CD8-positive, alpha-beta T cell (primary cell): ENCODE measurements at regions of chr9 and their contacts with region 1.

Region 1: GRCh38 chr9:113511856-113512761 is 48.6 kb downstream of the RGS3 start:
- DNase-seq: peak; percentile 41 to 89 (median 77)
- ATAC-seq: peak; percentile 68
- H3K4me3 ChIP-seq: peak overlapping the region; percentile 16 to 26
- H3K4me3 Mint-ChIP-seq: peak overlapping the region; percentile 74
- H3K27ac ChIP-seq: peak overlapping the region; percentile 60 to 65
- H3K27ac Mint-ChIP-seq: peak overlapping the region; percentile 90
- H3K4me1 ChIP-seq: peaks cover 59% of the 10 kb centered on the region
- H3K4me1 Mint-ChIP-seq: peaks cover 68% of the 10 kb centered on the region
- H3K27me3 ChIP-seq: no peaks in the 10 kb centered on the region
- H3K27me3 Mint-ChIP-seq: no peaks in the 10 kb centered on the region
- CTCF ChIP-seq: no peak

Region 2: DNA sequence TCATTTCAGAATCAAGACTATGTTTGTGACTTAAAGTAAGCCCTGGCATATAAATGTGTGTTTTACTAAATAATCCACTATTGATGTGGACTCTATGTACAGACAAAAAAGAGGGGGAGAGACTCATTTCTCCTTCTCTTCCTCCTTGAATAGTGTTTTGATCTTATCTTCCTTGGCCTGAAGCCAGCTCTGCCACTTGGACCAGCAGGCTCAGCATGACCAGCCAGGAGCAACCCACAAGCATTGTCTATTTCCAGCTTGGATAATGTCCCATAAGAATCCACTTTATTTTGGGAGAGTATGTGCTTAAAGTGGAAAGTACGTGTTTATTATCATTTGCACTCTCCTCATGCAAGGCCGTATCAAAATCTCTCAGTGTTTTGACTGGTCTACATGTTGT is 597.6 kb before region 1 on chr9:
- CTCF ChIA-PET with region 1: no interaction called
- POLR2A ChIA-PET with region 1: no interaction called
- intact Hi-C with region 1: no loop called
- DNase-seq: no peak
- ATAC-seq: no peak
- H3K4me3 ChIP-seq: no peak overlapping the region
- H3K4me3 Mint-ChIP-seq: no peak overlapping the region
- H3K27ac ChIP-seq: no peak overlapping the region
- H3K27ac Mint-ChIP-seq: no peak overlapping the region
- H3K4me1 ChIP-seq: no peaks in the 10 kb centered on the region
- H3K4me1 Mint-ChIP-seq: no peaks in the 10 kb centered on the region
- H3K27me3 ChIP-seq: no peaks in the 10 kb centered on the region
- H3K27me3 Mint-ChIP-seq: peaks cover 7% of the 10 kb centered on the region
- CTCF ChIP-seq: no peak

Region 3: DNA sequence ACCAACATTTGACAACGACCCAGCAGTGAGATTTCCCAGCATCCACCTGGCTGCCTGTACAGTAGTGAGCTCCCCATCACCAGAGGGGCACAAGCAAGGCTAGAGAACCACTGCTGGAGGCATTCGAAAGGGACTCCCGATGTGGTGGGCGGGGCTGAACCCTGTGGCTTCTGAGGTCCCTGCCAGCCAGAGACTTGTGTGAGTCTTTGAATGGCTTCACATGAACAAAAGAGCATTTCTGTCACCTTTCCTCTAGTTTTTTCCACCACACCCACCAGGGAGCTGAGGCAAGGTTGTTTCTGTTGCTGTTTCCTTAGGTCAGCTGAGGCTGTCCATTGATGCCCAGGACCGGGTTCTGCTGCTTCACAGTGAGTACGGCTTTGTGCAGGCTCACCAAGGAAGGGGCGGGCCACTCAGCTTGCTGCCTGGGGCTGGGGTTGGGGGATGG is 32.9 kb before region 1 on chr9:
- CTCF ChIA-PET with region 1: interaction called, 3 read pairs
- POLR2A ChIA-PET with region 1: no interaction called
- intact Hi-C with region 1: loop called in 1 of 2 experiments (anchors 5 kb)
- DNase-seq: peak in 8 of 9 experiments; percentile 11 to 63 (median 40)
- ATAC-seq: peak; percentile 52
- H3K4me3 ChIP-seq: no peak overlapping the region
- H3K4me3 Mint-ChIP-seq: no peak overlapping the region
- H3K27ac ChIP-seq: no peak overlapping the region
- H3K27ac Mint-ChIP-seq: no peak overlapping the region
- H3K4me1 ChIP-seq: peaks cover 12% of the 10 kb centered on the region
- H3K4me1 Mint-ChIP-seq: peaks cover 20% of the 10 kb centered on the region
- H3K27me3 ChIP-seq: no peaks in the 10 kb centered on the region
- H3K27me3 Mint-ChIP-seq: no peaks in the 10 kb centered on the region
- CTCF ChIP-seq: no peak

Region 4: GRCh38 chr9:113523421-113524236 is 11.5 kb after region 1 on chr9:
- CTCF ChIA-PET with region 1: interaction called, 9 read pairs
- POLR2A ChIA-PET with region 1: interaction called, 59 read pairs
- intact Hi-C with region 1: loop called in 1 of 2 experiments (anchors 1 kb)
- DNase-seq: peak in 8 of 9 experiments; percentile 46 to 87 (median 66)
- ATAC-seq: peak; percentile 27
- H3K4me3 ChIP-seq: peak overlapping the region; percentile 31 to 40
- H3K4me3 Mint-ChIP-seq: peak overlapping the region; percentile 80
- H3K27ac ChIP-seq: peak overlapping the region; percentile 19 to 78
- H3K27ac Mint-ChIP-seq: peak overlapping the region; percentile 94
- H3K4me1 ChIP-seq: peaks cover 97% of the 10 kb centered on the region
- H3K4me1 Mint-ChIP-seq: peaks cover 92% of the 10 kb centered on the region
- H3K27me3 ChIP-seq: no peaks in the 10 kb centered on the region
- H3K27me3 Mint-ChIP-seq: no peaks in the 10 kb centered on the region
- CTCF ChIP-seq: no peak

Region 5: GRCh38 chr9:113973851-113974413 is 461.8 kb after region 1 on chr9:
- CTCF ChIA-PET with region 1: no interaction called
- POLR2A ChIA-PET with region 1: no interaction called
- intact Hi-C with region 1: no loop called
- DNase-seq: no peak
- ATAC-seq: no peak
- H3K4me3 ChIP-seq: no peak overlapping the region
- H3K4me3 Mint-ChIP-seq: no peak overlapping the region
- H3K27ac ChIP-seq: no peak overlapping the region
- H3K27ac Mint-ChIP-seq: no peak overlapping the region
- H3K4me1 ChIP-seq: no peaks in the 10 kb centered on the region
- H3K4me1 Mint-ChIP-seq: no peaks in the 10 kb centered on the region
- H3K27me3 ChIP-seq: no peaks in the 10 kb centered on the region
- H3K27me3 Mint-ChIP-seq: no peaks in the 10 kb centered on the region
- CTCF ChIP-seq: no peak